GM12878 (cell line): ENCODE measurements at regions of chr5 and their contacts with region 1.

Region 1: GRCh38 chr5:15977851-15978250 is 201.7 kb downstream of the MARCHF11 start:
- DNase-seq: no peak
- ATAC-seq: no peak
- H3K4me3 ChIP-seq: no peak overlapping the region
- H3K27ac ChIP-seq: no peak overlapping the region
- H3K4me1 ChIP-seq: no peaks in the 10 kb centered on the region
- H3K27me3 ChIP-seq: no peaks in the 10 kb centered on the region
- CTCF ChIP-seq: no peak
- EP300 ChIP-seq: no peak
- POLR2A ChIP-seq: no peak
- RAD21 ChIP-seq: no peak

Region 2: GRCh38 chr5:15844253-15844652 is 133.6 kb before region 1 on chr5:
- CTCF ChIA-PET with region 1: no interaction called
- POLR2A ChIA-PET with region 1: no interaction called
- RAD21 ChIA-PET with region 1: no interaction called
- SMC1A ChIA-PET with region 1: no interaction called
- in situ Hi-C with region 1: no loop called
- intact Hi-C with region 1: no loop called
- DNase-seq: no peak
- ATAC-seq: no peak
- H3K4me3 ChIP-seq: no peak overlapping the region
- H3K27ac ChIP-seq: no peak overlapping the region
- H3K4me1 ChIP-seq: no peaks in the 10 kb centered on the region
- H3K27me3 ChIP-seq: no peaks in the 10 kb centered on the region
- CTCF ChIP-seq: no peak
- EP300 ChIP-seq: no peak
- POLR2A ChIP-seq: no peak
- RAD21 ChIP-seq: no peak

Region 3: DNA sequence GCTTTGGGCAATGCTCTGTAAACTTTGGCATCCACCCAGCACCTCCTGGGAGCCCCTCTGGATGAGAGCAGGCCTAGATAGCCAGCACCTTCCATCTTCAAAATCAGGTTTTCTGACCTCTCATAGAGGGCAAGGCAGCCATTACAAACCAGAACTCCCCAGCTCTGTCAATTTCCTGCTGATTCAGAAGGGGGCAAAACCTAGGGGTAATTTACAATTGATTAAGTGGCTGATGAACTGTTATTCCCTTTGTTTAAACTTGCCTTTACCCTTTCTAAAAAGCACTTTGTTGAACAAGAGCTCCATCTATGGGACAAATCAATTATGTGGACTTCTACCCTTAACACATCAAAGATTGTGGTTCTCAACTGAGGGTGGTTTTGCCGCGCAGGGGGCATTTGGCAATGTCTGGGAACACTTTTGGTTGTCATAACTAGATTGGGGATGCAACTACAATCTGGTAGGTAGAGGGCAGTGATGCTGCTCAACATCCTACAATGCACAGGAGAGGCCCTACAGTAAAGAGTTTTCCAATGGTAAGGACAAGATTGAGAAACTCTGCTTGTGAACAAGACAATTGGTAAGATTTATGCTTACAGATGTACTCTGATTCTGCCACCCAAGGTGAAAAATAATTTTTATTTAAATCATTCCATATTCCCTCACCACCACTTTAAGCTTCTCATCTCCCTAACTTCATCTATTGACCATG is 17.6 kb after region 1 on chr5:
- CTCF ChIA-PET with region 1: no interaction called
- POLR2A ChIA-PET with region 1: no interaction called
- RAD21 ChIA-PET with region 1: no interaction called
- SMC1A ChIA-PET with region 1: no interaction called
- in situ Hi-C with region 1: no loop called
- intact Hi-C with region 1: no loop called
- DNase-seq: no peak
- ATAC-seq: peak; percentile 85
- H3K4me3 ChIP-seq: no peak overlapping the region
- H3K27ac ChIP-seq: no peak overlapping the region
- H3K4me1 ChIP-seq: no peaks in the 10 kb centered on the region
- H3K27me3 ChIP-seq: no peaks in the 10 kb centered on the region
- CTCF ChIP-seq: peak in 2 of 3 experiments; percentile 6 to 34; a peak in 1 of 6 replicates
- EP300 ChIP-seq: no peak
- POLR2A ChIP-seq: no peak
- RAD21 ChIP-seq: no peak

Region 4: GRCh38 chr5:16427587-16427986 is 449.7 kb after region 1 on chr5:
- CTCF ChIA-PET with region 1: no interaction called
- POLR2A ChIA-PET with region 1: no interaction called
- RAD21 ChIA-PET with region 1: no interaction called
- SMC1A ChIA-PET with region 1: no interaction called
- in situ Hi-C with region 1: no loop called
- intact Hi-C with region 1: loop called (anchors 10 kb)
- DNase-seq: no peak
- ATAC-seq: no peak
- H3K4me3 ChIP-seq: no peak overlapping the region
- H3K27ac ChIP-seq: no peak overlapping the region
- H3K4me1 ChIP-seq: no peaks in the 10 kb centered on the region
- H3K27me3 ChIP-seq: no peaks in the 10 kb centered on the region
- CTCF ChIP-seq: no peak
- EP300 ChIP-seq: no peak
- POLR2A ChIP-seq: no peak
- RAD21 ChIP-seq: no peak